Transverse colon (tissue), 4 donors: ENCODE measurements at regions of chr7 and their contacts with region 1.

Region 1: DNA sequence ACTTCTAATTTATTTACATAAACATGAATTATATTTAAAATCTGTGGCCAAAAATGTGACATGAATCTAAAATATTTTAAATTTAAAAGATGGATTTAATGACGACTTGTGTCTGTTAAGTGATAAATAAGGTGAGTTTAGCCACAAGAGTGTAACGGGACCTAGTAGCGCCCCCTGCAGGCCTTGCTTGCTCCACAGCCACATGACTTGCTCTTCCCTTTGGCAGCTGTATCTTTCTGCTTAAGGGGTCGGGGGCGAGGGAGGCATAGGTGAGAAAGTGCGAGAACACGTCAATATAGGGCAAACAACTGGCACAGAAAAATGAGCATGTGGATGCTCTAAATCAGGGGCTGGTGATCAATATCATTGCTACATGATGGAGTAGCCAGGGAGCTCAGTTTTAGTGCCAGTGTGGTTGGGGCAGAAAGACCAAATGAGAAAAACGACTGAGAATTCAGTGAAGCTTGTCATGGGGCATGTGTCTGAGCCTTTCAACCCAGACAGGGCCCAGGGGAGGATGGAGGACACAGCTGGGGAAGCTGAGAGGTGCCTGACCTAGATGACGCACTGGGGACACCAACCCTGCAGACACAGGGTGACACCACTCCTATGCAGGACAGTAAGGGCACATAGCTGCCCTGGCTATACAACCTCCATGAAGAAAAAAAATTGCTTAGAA is 49.8 kb downstream of the PAXIP1 start:
- DNase-seq: peak; percentile 70
- H3K4me3 ChIP-seq: no peak overlapping the region
- H3K27ac ChIP-seq: no peak overlapping the region
- H3K4me1 ChIP-seq: no peaks in the 10 kb centered on the region
- H3K27me3 ChIP-seq: no peaks in the 10 kb centered on the region
- CTCF ChIP-seq: peak; percentile 57 to 79 (median 68)
- EP300 ChIP-seq: no peak
- POLR2A ChIP-seq: no peak

Region 2: GRCh38 chr7:154781369-154782303 is 171.5 kb before region 1 on chr7:
- in situ Hi-C with region 1: no loop called
- intact Hi-C with region 1: no loop called
- DNase-seq: no peak
- H3K4me3 ChIP-seq: no peak overlapping the region
- H3K27ac ChIP-seq: no peak overlapping the region
- H3K4me1 ChIP-seq: no peaks in the 10 kb centered on the region
- H3K27me3 ChIP-seq: no peaks in the 10 kb centered on the region
- CTCF ChIP-seq: no peak
- EP300 ChIP-seq: no peak
- POLR2A ChIP-seq: no peak

Region 3: GRCh38 chr7:154832557-154833138 is 120.5 kb before region 1 on chr7:
- in situ Hi-C with region 1: loop called in 1 of 4 experiments (anchors 25 kb)
- intact Hi-C with region 1: no loop called
- DNase-seq: peak; percentile 46
- H3K4me3 ChIP-seq: no peak overlapping the region
- H3K27ac ChIP-seq: no peak overlapping the region
- H3K4me1 ChIP-seq: no peaks in the 10 kb centered on the region
- H3K27me3 ChIP-seq: no peaks in the 10 kb centered on the region
- CTCF ChIP-seq: peak; percentile 22 to 59 (median 44)
- EP300 ChIP-seq: no peak
- POLR2A ChIP-seq: no peak